CD8-positive, alpha-beta T cell (primary cell): ENCODE measurements at regions of chr6 and their contacts with region 1.

Region 1: GRCh38 chr6:166989427-166990032 is 9.7 kb upstream of the CEP43 start:
- DNase-seq: peak in 7 of 9 experiments; percentile 43 to 72 (median 59)
- ATAC-seq: peak; percentile 82
- H3K4me3 ChIP-seq: no peak overlapping the region
- H3K4me3 Mint-ChIP-seq: no peak overlapping the region
- H3K27ac ChIP-seq: no peak overlapping the region
- H3K27ac Mint-ChIP-seq: no peak overlapping the region
- H3K4me1 ChIP-seq: peaks cover 5% of the 10 kb centered on the region
- H3K4me1 Mint-ChIP-seq: peaks cover 16% of the 10 kb centered on the region
- H3K27me3 ChIP-seq: no peaks in the 10 kb centered on the region
- H3K27me3 Mint-ChIP-seq: no peaks in the 10 kb centered on the region
- CTCF ChIP-seq: peak; percentile 66

Region 2: GRCh38 chr6:166862287-166862977 is 127.1 kb before region 1 on chr6:
- CTCF ChIA-PET with region 1: interaction called, 4 read pairs
- POLR2A ChIA-PET with region 1: no interaction called
- intact Hi-C with region 1: loop called in 1 of 2 experiments (anchors 2 kb)
- DNase-seq: peak in 7 of 9 experiments; percentile 10 to 58 (median 33)
- ATAC-seq: peak; percentile 87
- H3K4me3 ChIP-seq: peak overlapping the region; percentile 48 to 59
- H3K4me3 Mint-ChIP-seq: peak overlapping the region; percentile 85
- H3K27ac ChIP-seq: no peak overlapping the region
- H3K27ac Mint-ChIP-seq: no peak overlapping the region
- H3K4me1 ChIP-seq: peaks cover 8% of the 10 kb centered on the region
- H3K4me1 Mint-ChIP-seq: peaks cover 9% of the 10 kb centered on the region
- H3K27me3 ChIP-seq: peaks cover 5 to 9% of the 10 kb centered on the region in 2 experiments
- H3K27me3 Mint-ChIP-seq: peaks cover 15% of the 10 kb centered on the region
- CTCF ChIP-seq: no peak

Region 3: DNA sequence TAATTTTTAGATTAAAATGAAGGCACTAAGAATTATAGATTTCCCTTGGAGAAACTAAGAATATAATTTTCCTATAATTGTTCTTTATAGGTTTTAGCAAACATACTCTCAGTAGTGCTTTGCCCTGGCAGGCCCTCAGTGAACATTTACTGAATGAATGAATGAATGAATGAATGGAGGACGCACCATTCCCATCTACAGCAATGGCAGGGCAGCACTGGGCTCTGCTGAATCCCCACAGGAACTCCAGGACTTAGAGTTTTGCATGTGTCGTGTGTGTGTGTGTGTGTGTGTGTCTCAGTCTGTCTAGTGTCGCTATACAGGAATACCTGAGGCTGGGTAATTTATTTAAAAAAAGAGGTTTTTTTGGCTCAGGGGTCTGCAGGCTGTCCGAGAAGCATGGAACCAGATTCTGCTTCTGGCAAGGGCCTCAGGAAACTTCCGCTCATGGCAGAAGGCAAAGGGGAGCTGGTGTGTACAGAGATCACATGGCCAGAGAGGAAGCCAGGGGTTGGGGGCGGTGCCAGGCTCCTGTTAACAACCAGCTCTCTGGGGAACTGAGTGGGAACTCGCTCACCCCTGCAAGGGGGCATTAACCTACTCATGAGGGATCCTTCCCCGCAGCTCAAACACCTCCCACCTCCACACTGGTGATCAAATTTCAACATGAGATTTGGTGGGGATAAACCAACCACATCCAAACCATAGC is 53.3 kb before region 1 on chr6:
- CTCF ChIA-PET with region 1: interaction called, 15 read pairs
- POLR2A ChIA-PET with region 1: interaction called, 3 read pairs
- intact Hi-C with region 1: loop called in 1 of 2 experiments (anchors 5 kb)
- DNase-seq: peak in 1 of 9 experiments; percentile 23
- ATAC-seq: peak; percentile 61
- H3K4me3 ChIP-seq: no peak overlapping the region
- H3K4me3 Mint-ChIP-seq: no peak overlapping the region
- H3K27ac ChIP-seq: no peak overlapping the region
- H3K27ac Mint-ChIP-seq: peak overlapping the region; percentile 27
- H3K4me1 ChIP-seq: peaks cover 17% of the 10 kb centered on the region
- H3K4me1 Mint-ChIP-seq: peaks cover 21% of the 10 kb centered on the region
- H3K27me3 ChIP-seq: no peaks in the 10 kb centered on the region
- H3K27me3 Mint-ChIP-seq: no peaks in the 10 kb centered on the region
- CTCF ChIP-seq: no peak

Region 4: DNA sequence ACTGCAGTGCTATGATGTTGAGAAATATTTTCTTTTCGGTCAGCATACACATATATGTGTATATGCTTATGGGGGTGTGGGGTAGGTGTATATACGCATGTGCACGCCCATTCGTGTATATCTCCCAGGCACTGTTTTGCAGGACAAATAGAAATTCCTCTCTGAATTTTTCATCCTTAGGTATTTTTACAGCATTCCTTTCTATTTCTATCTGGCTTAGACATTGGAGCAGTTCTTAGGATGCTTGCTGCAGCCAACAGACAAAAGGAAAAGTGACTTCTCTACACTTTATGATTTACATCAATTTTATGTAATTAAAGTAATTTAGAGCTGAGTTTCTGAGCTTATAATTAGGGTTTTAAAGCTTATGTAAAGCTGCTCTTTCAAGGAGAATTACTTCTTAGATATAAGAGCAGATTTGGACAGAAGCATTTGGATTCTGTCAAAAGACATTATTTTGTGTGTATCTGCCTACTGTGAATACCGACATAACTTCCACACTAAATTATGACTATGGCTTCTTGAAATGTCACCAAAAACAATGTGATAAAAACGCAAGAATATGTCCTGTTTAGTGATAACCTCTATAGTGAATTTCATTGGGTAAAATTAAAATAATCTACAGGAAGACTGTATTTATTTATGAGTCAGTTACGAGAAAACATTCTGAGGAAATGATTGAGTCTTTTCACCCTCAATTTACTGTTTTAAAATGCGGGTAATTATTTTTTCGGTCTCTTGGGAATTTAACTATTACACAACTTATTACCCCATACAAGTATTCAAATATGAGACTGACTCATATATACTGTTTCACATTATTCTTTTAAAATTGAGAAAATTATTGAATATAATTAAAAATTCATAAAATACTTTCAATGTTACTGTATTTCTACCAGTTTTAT is 11.7 kb before region 1 on chr6:
- CTCF ChIA-PET with region 1: interaction called, 13 read pairs
- POLR2A ChIA-PET with region 1: no interaction called
- intact Hi-C with region 1: no loop called
- DNase-seq: no peak
- ATAC-seq: no peak
- H3K4me3 ChIP-seq: no peak overlapping the region
- H3K4me3 Mint-ChIP-seq: no peak overlapping the region
- H3K27ac ChIP-seq: no peak overlapping the region
- H3K27ac Mint-ChIP-seq: no peak overlapping the region
- H3K4me1 ChIP-seq: no peaks in the 10 kb centered on the region
- H3K4me1 Mint-ChIP-seq: peaks cover 7% of the 10 kb centered on the region
- H3K27me3 ChIP-seq: no peaks in the 10 kb centered on the region
- H3K27me3 Mint-ChIP-seq: no peaks in the 10 kb centered on the region
- CTCF ChIP-seq: no peak

Region 5: GRCh38 chr6:167056370-167056769 is 66.8 kb after region 1 on chr6:
- CTCF ChIA-PET with region 1: no interaction called
- POLR2A ChIA-PET with region 1: no interaction called
- intact Hi-C with region 1: no loop called
- DNase-seq: peak in 3 of 9 experiments; percentile 30 to 63 (median 57)
- ATAC-seq: peak; percentile 75
- H3K4me3 ChIP-seq: no peak overlapping the region
- H3K4me3 Mint-ChIP-seq: no peak overlapping the region
- H3K27ac ChIP-seq: no peak overlapping the region
- H3K27ac Mint-ChIP-seq: peak overlapping the region; percentile 28
- H3K4me1 ChIP-seq: peaks cover 8% of the 10 kb centered on the region
- H3K4me1 Mint-ChIP-seq: peaks cover 33% of the 10 kb centered on the region
- H3K27me3 ChIP-seq: no peaks in the 10 kb centered on the region
- H3K27me3 Mint-ChIP-seq: no peaks in the 10 kb centered on the region
- CTCF ChIP-seq: no peak

Region 6: GRCh38 chr6:167533851-167534250 is 544.3 kb after region 1 on chr6:
- CTCF ChIA-PET with region 1: no interaction called
- POLR2A ChIA-PET with region 1: no interaction called
- intact Hi-C with region 1: no loop called
- DNase-seq: no peak
- ATAC-seq: no peak
- H3K4me3 ChIP-seq: no peak overlapping the region
- H3K4me3 Mint-ChIP-seq: no peak overlapping the region
- H3K27ac ChIP-seq: no peak overlapping the region
- H3K27ac Mint-ChIP-seq: no peak overlapping the region
- H3K4me1 ChIP-seq: no peaks in the 10 kb centered on the region
- H3K4me1 Mint-ChIP-seq: no peaks in the 10 kb centered on the region
- H3K27me3 ChIP-seq: no peaks in the 10 kb centered on the region
- H3K27me3 Mint-ChIP-seq: peaks cover 13% of the 10 kb centered on the region
- CTCF ChIP-seq: no peak